Heart left ventricle (tissue), 16 donors: ENCODE measurements at regions of chr3 and their contacts with region 1.

Region 1: DNA sequence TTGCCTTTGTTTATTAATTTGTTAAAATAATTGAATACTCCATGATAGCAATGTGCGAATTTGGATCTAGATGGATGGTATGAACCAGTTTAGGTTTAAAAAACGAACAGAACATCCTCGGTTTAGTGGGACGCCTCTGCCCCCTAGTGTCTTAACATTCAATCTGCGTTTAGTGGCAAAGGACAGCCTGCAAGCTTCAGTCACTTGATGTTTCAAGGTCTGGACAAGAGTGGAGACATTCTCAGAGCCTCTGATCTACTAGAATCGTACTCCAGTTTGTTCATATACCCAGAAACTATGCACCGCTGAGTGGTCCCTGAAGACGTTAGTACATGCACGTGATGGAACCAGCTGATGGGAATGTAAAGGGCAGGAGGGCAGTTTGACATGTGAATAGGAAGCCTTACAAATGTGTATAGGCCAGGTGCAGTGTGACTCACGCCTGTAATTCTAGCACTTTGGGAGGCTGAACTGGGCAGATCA is 17.8 kb upstream of the ATP13A4 start:
- DNase-seq: peak in 4 of 5 donors; percentile 37 to 48 (median 42)
- ATAC-seq: peak; percentile 37 to 79 (median 70)
- H3K4me3 ChIP-seq: no peak overlapping the region
- H3K27ac ChIP-seq: no peak overlapping the region
- H3K4me1 ChIP-seq: no peaks in the 10 kb centered on the region
- H3K27me3 ChIP-seq: no peaks in the 10 kb centered on the region
- CTCF ChIP-seq: peak; percentile 56 to 87 (median 74)
- POLR2A ChIP-seq: no peak

Region 2: DNA sequence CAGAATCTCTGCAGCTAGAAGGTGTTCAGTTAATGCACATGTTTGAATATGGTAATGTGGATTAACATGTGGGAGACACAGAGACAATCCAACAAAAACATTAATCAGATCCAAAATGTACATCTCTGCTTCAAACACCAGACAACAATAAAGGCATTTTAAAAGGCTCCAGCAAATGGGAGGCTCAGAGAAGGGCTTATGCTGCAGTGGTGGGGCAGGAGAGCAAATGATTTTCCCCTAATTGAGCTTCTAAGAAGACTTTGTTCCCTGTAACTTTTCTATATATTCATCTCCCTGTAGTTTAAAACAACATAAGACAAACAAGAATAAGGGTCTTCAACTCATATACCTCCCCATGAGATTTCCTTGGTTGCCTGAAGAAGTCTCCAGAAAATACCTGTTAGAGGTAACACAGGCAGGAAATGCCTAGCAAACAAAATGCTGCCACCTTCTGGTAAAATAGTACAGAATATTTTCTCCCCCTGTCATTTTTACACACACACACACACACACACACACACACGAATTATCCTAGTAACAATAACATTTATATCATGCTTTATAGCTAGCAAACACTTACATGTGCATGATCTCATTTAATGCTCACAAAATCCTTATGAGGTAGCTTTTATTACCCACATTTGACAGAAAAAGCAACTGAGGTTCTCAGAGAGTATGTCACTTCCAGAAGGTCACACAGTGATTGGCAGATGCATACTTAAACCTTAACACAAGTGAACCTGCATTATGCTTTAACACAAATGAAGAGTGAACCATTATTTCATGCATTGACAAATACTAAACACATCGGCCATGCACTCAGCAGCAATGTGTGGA is 531.4 kb before region 1 on chr3:
- intact Hi-C with region 1: loop called in 7 of 10 experiments (anchors 5 to 10 kb)
- DNase-seq: no peak
- ATAC-seq: peak in 1 of 4 donors; percentile 46
- H3K4me3 ChIP-seq: no peak overlapping the region
- H3K27ac ChIP-seq: no peak overlapping the region
- H3K4me1 ChIP-seq: no peaks in the 10 kb centered on the region
- H3K27me3 ChIP-seq: no peaks in the 10 kb centered on the region
- CTCF ChIP-seq: peak; percentile 31 to 71 (median 57)
- POLR2A ChIP-seq: no peak

Region 3: DNA sequence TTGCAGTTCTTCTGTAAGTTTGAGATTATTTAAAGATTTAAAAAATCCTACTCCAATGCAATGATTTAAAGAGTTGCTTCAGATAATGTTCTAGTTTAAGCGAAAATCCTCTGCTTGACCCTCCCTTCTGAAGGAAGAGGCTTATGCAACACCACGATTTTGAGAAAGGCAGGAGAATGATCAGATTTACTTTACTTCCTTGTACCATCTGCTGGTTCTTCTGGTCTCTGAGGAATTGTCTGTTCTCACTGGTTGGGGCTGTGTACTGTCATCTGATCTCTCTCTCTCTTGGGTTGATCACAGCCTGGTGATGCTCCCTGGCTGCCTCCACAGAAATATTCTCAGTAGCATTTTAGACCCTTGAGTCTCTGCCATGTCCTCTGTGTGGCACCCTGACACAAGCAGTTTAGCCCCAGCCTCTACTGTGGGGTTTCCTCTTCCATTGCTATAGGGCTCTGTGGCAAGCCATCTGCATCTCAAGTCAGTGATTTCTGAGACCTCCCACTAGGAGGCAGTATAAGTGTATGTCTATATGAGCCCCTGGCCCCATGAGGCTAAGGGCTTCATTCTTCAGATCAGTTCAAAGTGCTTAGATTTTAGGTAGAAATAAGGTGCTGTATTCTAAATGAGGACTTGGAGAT is 382.2 kb before region 1 on chr3:
- intact Hi-C with region 1: loop called in 5 of 10 experiments (anchors 2 to 10 kb)
- DNase-seq: no peak
- ATAC-seq: peak in 2 of 4 donors; percentile 38 to 43
- H3K4me3 ChIP-seq: no peak overlapping the region
- H3K27ac ChIP-seq: no peak overlapping the region
- H3K4me1 ChIP-seq: no peaks in the 10 kb centered on the region
- H3K27me3 ChIP-seq: no peaks in the 10 kb centered on the region
- CTCF ChIP-seq: peak; percentile 13 to 48 (median 33)
- POLR2A ChIP-seq: no peak

Region 4: DNA sequence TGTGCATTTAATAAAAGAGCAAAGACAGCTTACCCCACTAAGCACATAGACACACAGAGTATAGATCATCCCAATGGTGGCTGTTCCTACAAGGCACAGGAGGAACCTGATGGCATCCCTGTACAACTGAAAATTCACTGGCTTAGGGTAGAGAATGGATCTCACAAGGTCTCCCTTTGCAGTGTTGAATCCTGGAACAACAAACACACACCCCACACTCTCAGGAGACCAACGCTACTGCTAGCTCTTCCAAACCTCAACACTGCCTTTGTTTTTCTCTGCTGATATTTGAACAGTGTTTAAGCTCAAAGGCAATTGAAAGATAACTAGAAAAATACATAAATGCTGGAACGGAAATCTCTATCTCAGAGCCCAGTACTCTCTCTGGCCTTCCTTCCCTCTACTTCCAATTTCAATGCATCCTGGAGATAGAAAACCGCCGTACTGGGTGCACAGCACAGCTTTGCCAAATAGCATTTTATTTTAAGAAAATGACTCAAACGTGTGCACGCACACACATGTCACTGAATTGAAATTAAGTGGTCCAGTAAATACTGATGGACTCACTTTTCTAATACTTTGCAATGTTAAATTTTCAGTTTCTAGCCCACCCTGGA is 106.4 kb before region 1 on chr3:
- intact Hi-C with region 1: loop called (anchors 1 to 10 kb)
- DNase-seq: no peak
- ATAC-seq: no peak
- H3K4me3 ChIP-seq: no peak overlapping the region
- H3K27ac ChIP-seq: no peak overlapping the region
- H3K4me1 ChIP-seq: peaks cover 0 to 6% (median 0%) of the 10 kb centered on the region in 12 donors
- H3K27me3 ChIP-seq: no peaks in the 10 kb centered on the region
- CTCF ChIP-seq: no peak
- POLR2A ChIP-seq: no peak